ENCODE measurements at regions of chr18 and their contacts with region 1.

Region 1: DNA sequence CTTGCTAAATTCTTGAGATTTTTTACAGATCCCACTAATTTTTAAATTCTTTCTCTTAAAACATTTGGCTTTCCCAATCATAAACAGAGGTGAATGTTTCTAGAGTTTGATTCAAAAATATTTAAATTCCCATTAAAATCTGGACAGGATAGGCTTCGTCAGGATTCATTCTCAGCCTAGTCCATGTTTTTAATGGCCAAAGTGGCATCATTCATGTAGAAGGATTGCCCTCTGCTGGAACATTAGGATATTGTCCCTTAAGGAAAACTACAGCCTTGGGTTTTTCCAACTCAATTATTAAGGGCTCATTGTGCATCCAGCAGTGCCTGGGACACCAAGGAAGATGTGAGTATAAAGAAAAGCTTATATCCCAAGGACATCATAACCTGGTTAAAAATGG is 71.7 kb downstream of the TPGS2 start:
- DNase-seq: peak in 1 of 2 experiments; percentile 13
- H3K4me3 ChIP-seq: no peak overlapping the region
- H3K4me3 Mint-ChIP-seq: no peak overlapping the region
- H3K27ac Mint-ChIP-seq: no peak overlapping the region
- H3K4me1 ChIP-seq: no peaks in the 10 kb centered on the region
- H3K4me1 Mint-ChIP-seq: no peaks in the 10 kb centered on the region
- H3K27me3 ChIP-seq: no peaks in the 10 kb centered on the region
- H3K27me3 Mint-ChIP-seq: no peaks in the 10 kb centered on the region
- CTCF ChIP-seq: peak; percentile 14 to 31

Region 2: GRCh38 chr18:36572135-36572856 is 184.8 kb before region 1 on chr18:
- CTCF ChIA-PET with region 1: no interaction called
- POLR2A ChIA-PET with region 1: no interaction called
- intact Hi-C with region 1: loop called (anchors 10 kb)
- DNase-seq: peak in 1 of 2 experiments; percentile 5
- H3K4me3 ChIP-seq: no peak overlapping the region
- H3K4me3 Mint-ChIP-seq: no peak overlapping the region
- H3K27ac Mint-ChIP-seq: no peak overlapping the region
- H3K4me1 ChIP-seq: no peaks in the 10 kb centered on the region
- H3K4me1 Mint-ChIP-seq: no peaks in the 10 kb centered on the region
- H3K27me3 ChIP-seq: no peaks in the 10 kb centered on the region
- H3K27me3 Mint-ChIP-seq: peaks cover 7% of the 10 kb centered on the region
- CTCF ChIP-seq: peak in 1 of 2 experiments; percentile 25

Region 3: GRCh38 chr18:36688020-36688965 is 68.8 kb before region 1 on chr18:
- CTCF ChIA-PET with region 1: interaction called, 5 read pairs
- POLR2A ChIA-PET with region 1: no interaction called
- intact Hi-C with region 1: loop called (anchors 1 kb)
- DNase-seq: peak; percentile 45 to 67
- H3K4me3 ChIP-seq: no peak overlapping the region
- H3K4me3 Mint-ChIP-seq: no peak overlapping the region
- H3K27ac Mint-ChIP-seq: no peak overlapping the region
- H3K4me1 ChIP-seq: no peaks in the 10 kb centered on the region
- H3K4me1 Mint-ChIP-seq: no peaks in the 10 kb centered on the region
- H3K27me3 ChIP-seq: no peaks in the 10 kb centered on the region; the same call in 1 of the 2 replicates
- H3K27me3 Mint-ChIP-seq: peaks cover 16% of the 10 kb centered on the region
- CTCF ChIP-seq: peak; percentile 45 to 72